Caco-2 (cell line): ENCODE measurements at regions of chr7 and their contacts with region 1.

Region 1: DNA sequence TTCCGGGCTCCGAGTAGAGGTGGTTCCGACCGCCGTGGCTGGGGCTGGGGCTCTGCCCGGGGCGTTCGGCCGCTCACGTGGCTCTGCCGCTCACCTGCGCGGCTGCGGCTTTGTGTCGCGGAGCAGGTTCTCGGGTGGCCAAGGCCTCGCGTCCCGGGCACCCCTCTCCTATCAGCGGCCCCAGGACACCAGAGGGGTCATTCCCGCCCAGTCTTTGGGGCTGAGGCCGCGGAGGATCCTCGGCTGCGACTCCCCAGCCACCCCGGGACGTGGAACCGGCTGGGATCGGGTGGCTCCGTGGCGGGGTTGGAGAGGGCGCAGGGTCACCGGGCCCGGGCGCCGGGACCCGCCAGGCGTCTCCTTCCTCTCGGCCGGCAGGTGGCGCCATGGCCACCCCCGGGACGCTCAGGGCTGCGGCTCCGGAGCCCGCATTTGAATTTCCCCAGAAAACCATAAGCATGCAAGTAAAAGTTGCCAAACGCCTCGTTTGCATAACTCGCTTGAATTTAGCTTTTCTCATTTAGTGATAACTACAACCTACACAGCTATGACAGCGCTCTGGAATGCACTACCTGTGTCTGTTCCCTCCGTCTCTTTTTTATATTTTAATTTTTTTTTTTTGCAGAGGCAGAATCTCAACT is 1.2 kb downstream of the COL26A1 start:
- DNase-seq: peak; percentile 75 to 89
- H3K4me3 ChIP-seq: peak overlapping the region; percentile 77
- H3K4me3 Mint-ChIP-seq: peak overlapping the region; percentile 69
- H3K27ac Mint-ChIP-seq: peak overlapping the region; percentile 31
- H3K4me1 ChIP-seq: peaks cover 5% of the 10 kb centered on the region; the same call in 1 of the 2 replicates
- H3K4me1 Mint-ChIP-seq: no peaks in the 10 kb centered on the region
- H3K27me3 ChIP-seq: no peaks in the 10 kb centered on the region
- H3K27me3 Mint-ChIP-seq: no peaks in the 10 kb centered on the region
- CTCF ChIP-seq: peak; percentile 90 to 94

Region 2: DNA sequence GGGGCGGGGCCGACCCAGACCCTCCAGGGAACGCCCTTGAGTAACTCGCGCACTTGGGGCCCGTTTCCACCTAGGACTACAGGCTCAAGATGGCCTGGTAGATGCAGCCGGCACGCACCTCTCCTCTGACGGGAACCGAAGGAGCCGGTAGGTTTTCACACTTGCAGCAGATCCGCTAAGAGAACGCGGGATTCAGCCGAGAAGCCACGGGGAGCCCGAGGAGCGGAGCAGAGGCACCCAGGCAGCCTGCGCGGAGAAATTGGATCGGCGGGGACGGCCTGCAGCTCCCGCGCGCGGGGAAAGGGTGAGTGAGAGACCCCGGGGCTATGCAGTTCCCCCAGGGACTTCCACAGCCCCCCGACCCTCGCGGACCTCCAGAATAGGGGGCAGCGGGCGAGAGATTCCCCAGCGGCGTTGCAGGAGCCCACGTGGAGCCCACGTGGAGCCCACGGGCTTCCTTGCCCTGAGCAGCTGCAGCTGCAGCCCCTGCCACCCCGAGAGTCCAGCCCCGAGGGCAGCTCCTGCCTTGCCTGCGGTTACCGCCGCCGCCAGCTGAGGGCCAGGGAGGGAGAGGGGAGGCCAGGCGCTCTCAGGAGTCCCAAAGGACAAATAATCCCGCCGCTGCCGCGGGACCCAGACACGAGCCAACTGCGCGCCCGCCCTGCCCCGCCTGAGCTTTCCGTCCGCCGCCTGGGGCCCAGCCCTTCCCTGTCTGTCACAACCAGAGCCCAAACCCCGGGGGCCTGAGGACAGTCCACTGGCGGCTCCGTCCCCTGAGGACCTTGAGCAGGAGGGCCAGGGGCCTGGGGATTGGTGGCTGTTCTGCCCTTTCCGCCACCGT is 55.4 kb before region 1 on chr7:
- CTCF ChIA-PET with region 1: no interaction called
- POLR2A ChIA-PET with region 1: interaction called, 20 read pairs
- intact Hi-C with region 1: no loop called
- DNase-seq: peak; percentile 90 to 94
- H3K4me3 ChIP-seq: peak overlapping the region; percentile 87
- H3K4me3 Mint-ChIP-seq: peak overlapping the region; percentile 100
- H3K27ac Mint-ChIP-seq: peak overlapping the region; percentile 99
- H3K4me1 ChIP-seq: no peaks in the 10 kb centered on the region
- H3K4me1 Mint-ChIP-seq: peaks cover 9% of the 10 kb centered on the region
- H3K27me3 ChIP-seq: no peaks in the 10 kb centered on the region
- H3K27me3 Mint-ChIP-seq: no peaks in the 10 kb centered on the region
- CTCF ChIP-seq: no peak

Region 3: GRCh38 chr7:101321491-101322401 is 42.1 kb before region 1 on chr7 and contains the start of gene IFT22:
- CTCF ChIA-PET with region 1: interaction called, 31 read pairs
- POLR2A ChIA-PET with region 1: interaction called, 11 read pairs
- intact Hi-C with region 1: loop called (anchors 2 kb)
- DNase-seq: peak; percentile 92 to 93
- H3K4me3 ChIP-seq: peak within 1 kb of the TSS; percentile 95
- H3K4me3 Mint-ChIP-seq: peak within 1 kb of the TSS; percentile 87
- H3K27ac Mint-ChIP-seq: peak within 1 kb of the TSS; percentile 91
- H3K4me1 ChIP-seq: 0 out of 2 replicates have a peak, but pooled peaks cover 5% of the 10 kb centered on the region
- H3K4me1 Mint-ChIP-seq: no peaks in the 10 kb centered on the region
- H3K27me3 ChIP-seq: no peaks in the 10 kb centered on the region
- H3K27me3 Mint-ChIP-seq: no peaks in the 10 kb centered on the region
- CTCF ChIP-seq: peak; percentile 53 to 66
- total RNA-seq, gene IFT22: 14.4 and 17.4 TPM in 2 replicates

Region 4: DNA sequence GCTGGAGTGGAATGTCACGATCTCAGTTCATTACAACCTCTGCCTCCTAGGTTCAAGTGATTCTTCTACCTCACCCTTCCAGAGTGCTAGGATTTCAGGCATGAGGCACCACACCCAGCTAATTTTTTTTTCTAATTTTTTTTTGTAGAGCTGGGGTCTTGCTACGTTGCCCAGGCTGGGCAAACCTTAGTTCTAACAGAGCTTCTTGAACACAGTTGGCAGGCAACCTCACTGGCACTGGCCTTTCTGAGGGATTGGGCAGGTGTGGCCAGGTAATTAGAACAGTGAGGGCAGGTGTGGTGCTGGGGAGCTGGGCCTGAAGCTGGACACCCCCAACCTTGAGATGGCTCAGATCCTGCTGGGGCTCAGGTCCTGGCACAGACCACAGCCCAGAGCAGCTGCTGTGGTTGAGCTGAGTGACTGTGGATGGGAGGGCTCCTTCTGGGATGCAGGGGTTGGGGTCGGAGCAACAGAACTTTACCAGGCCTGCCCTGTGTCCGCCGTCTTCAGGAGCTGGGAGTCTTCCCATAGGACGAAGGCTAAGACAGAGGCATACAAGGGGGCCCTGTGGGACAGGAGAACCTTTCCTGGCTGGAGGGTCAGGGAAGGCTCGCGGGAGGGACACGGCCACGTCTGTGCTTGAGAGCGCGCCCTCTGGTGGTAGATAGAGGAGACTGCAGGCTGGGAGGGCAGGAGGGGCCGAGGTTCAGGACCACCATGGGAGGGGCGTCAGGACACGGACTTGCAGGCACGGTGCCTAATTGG is 47.1 kb after region 1 on chr7:
- CTCF ChIA-PET with region 1: interaction called, 6 read pairs
- POLR2A ChIA-PET with region 1: no interaction called
- intact Hi-C with region 1: loop called (anchors 2 kb)
- DNase-seq: peak; percentile 57 to 58
- H3K4me3 ChIP-seq: no peak overlapping the region
- H3K4me3 Mint-ChIP-seq: no peak overlapping the region
- H3K27ac Mint-ChIP-seq: no peak overlapping the region
- H3K4me1 ChIP-seq: no peaks in the 10 kb centered on the region
- H3K4me1 Mint-ChIP-seq: no peaks in the 10 kb centered on the region
- H3K27me3 ChIP-seq: no peaks in the 10 kb centered on the region
- H3K27me3 Mint-ChIP-seq: no peaks in the 10 kb centered on the region
- CTCF ChIP-seq: peak; percentile 59 to 86

Region 5: GRCh38 chr7:101442521-101442981 is 78.7 kb after region 1 on chr7:
- CTCF ChIA-PET with region 1: interaction called, 5 read pairs
- POLR2A ChIA-PET with region 1: interaction called, 3 read pairs
- intact Hi-C with region 1: loop called (anchors 2 kb)
- DNase-seq: peak; percentile 49 to 63
- H3K4me3 ChIP-seq: no peak overlapping the region
- H3K4me3 Mint-ChIP-seq: peak overlapping the region; percentile 45
- H3K27ac Mint-ChIP-seq: peak overlapping the region; percentile 68
- H3K4me1 ChIP-seq: peaks cover 22% of the 10 kb centered on the region
- H3K4me1 Mint-ChIP-seq: peaks cover 9% of the 10 kb centered on the region
- H3K27me3 ChIP-seq: no peaks in the 10 kb centered on the region
- H3K27me3 Mint-ChIP-seq: no peaks in the 10 kb centered on the region
- CTCF ChIP-seq: no peak

Region 6: GRCh38 chr7:101550641-101551541 is 187.0 kb after region 1 on chr7:
- CTCF ChIA-PET with region 1: no interaction called
- POLR2A ChIA-PET with region 1: no interaction called
- intact Hi-C with region 1: no loop called
- DNase-seq: peak; percentile 47 to 55
- H3K4me3 ChIP-seq: no peak overlapping the region
- H3K4me3 Mint-ChIP-seq: no peak overlapping the region
- H3K27ac Mint-ChIP-seq: no peak overlapping the region
- H3K4me1 ChIP-seq: 0 out of 2 replicates have a peak, but pooled peaks cover 3% of the 10 kb centered on the region
- H3K4me1 Mint-ChIP-seq: peaks cover 8% of the 10 kb centered on the region
- H3K27me3 ChIP-seq: no peaks in the 10 kb centered on the region
- H3K27me3 Mint-ChIP-seq: no peaks in the 10 kb centered on the region
- CTCF ChIP-seq: no peak